ENCODE measurements at regions of chr9 and their contacts with region 1.

Region 1: DNA sequence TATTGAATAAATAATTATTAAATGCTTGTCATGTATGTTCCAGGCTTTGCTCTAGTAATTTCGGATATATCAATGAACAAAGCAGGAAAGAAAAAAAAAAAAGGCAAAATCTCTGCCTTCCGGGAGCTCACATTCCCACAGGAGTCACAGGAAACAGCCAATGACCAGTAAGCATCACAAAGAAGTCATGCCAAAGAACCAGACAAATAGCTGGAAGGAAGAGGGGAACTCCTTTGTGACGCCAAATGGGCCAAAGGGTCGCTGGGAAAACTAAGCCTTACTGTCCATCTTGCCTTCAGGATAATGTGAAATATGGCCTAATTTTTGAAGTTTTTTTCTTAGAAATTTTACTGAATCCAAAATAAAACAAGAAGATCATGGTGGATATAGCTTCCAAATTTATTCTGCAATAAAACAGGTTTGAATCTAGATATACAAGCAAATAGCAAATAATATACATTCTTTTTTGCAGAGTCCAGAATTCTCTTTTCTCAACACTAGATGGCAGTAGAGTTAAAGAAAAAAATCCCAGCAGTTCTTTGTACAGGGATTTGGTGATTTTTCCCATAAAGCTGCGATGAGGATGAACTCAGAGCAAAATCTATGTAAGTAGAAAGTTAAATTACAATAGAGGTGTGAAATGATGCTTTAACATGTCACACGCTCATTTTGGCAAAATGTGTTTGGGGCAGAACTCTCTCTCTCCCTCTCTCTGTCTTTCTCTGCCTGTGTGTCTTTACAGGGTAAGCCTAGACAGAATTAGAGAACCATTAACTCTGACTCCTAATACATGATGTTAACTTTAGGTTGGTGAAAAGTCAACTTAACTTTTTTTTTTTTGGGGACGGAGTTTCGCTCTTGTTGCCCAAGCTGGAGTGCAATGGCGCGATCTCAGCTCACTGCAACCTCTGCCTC is 60.0 kb upstream of the TUT7 start:
- DNase-seq: no peak
- H3K4me3 ChIP-seq: no peak overlapping the region
- H3K27ac ChIP-seq: no peak overlapping the region
- H3K4me1 ChIP-seq: no peaks in the 10 kb centered on the region
- H3K27me3 ChIP-seq: no peaks in the 10 kb centered on the region
- CTCF ChIP-seq: peak; percentile 40 to 68 (median 66)
- EP300 ChIP-seq: no peak
- POLR2A ChIP-seq: no peak

Region 2: GRCh38 chr9:85917756-85918155 is 496.5 kb before region 1 on chr9:
- intact Hi-C with region 1: no loop called
- DNase-seq: no peak
- H3K4me3 ChIP-seq: no peak overlapping the region
- H3K27ac ChIP-seq: no peak overlapping the region
- H3K4me1 ChIP-seq: no peaks in the 10 kb centered on the region
- H3K27me3 ChIP-seq: no peaks in the 10 kb centered on the region
- CTCF ChIP-seq: no peak
- EP300 ChIP-seq: no peak
- POLR2A ChIP-seq: no peak

Region 3: DNA sequence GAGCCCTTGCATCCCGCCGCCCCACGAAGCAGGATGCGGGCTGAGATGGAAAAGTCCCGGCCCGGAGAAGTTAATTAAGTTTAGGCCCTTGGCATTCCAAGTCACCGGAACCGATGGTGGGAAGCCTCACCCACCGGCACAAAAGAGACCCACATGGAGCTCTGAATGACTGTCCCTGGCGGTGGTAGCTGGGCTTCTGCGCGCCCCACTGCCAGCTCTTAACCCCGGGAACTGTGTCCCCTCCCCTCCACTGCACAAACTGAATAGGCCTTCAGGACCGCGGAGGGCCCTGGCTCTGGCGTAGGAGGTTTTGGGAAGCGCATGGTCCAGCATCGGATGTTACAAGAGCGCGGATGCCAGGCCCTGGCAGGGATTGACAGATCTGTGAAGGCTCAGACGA is 231.1 kb after region 1 on chr9:
- intact Hi-C with region 1: no loop called
- DNase-seq: no peak
- H3K4me3 ChIP-seq: no peak overlapping the region
- H3K27ac ChIP-seq: no peak overlapping the region
- H3K4me1 ChIP-seq: no peaks in the 10 kb centered on the region
- H3K27me3 ChIP-seq: no peaks in the 10 kb centered on the region
- CTCF ChIP-seq: no peak
- EP300 ChIP-seq: no peak
- POLR2A ChIP-seq: no peak

Region 4: GRCh38 chr9:87020169-87020950 is 606.1 kb after region 1 on chr9:
- intact Hi-C with region 1: no loop called
- DNase-seq: no peak
- H3K4me3 ChIP-seq: no peak overlapping the region
- H3K27ac ChIP-seq: no peak overlapping the region
- H3K4me1 ChIP-seq: no peaks in the 10 kb centered on the region
- H3K27me3 ChIP-seq: no peaks in the 10 kb centered on the region
- CTCF ChIP-seq: no peak
- EP300 ChIP-seq: no peak
- POLR2A ChIP-seq: no peak

Region 5: GRCh38 chr9:87662808-87663528 is 1248.7 kb after region 1 on chr9:
- intact Hi-C with region 1: loop called in 1 of 4 experiments (anchors 10 kb)
- DNase-seq: peak; percentile 65 to 84 (median 80)
- H3K4me3 ChIP-seq: no peak overlapping the region
- H3K27ac ChIP-seq: no peak overlapping the region
- H3K4me1 ChIP-seq: peaks cover 3% of the 10 kb centered on the region
- H3K27me3 ChIP-seq: no peaks in the 10 kb centered on the region
- CTCF ChIP-seq: peak in 2 of 3 donors; percentile 53 to 66
- EP300 ChIP-seq: no peak
- POLR2A ChIP-seq: peak; percentile 12

Measured in ovary (tissue), 10 donors.